Mammary epithelial cell (primary cell): ENCODE measurements at regions of chr18 and their contacts with region 1.

Region 1: DNA sequence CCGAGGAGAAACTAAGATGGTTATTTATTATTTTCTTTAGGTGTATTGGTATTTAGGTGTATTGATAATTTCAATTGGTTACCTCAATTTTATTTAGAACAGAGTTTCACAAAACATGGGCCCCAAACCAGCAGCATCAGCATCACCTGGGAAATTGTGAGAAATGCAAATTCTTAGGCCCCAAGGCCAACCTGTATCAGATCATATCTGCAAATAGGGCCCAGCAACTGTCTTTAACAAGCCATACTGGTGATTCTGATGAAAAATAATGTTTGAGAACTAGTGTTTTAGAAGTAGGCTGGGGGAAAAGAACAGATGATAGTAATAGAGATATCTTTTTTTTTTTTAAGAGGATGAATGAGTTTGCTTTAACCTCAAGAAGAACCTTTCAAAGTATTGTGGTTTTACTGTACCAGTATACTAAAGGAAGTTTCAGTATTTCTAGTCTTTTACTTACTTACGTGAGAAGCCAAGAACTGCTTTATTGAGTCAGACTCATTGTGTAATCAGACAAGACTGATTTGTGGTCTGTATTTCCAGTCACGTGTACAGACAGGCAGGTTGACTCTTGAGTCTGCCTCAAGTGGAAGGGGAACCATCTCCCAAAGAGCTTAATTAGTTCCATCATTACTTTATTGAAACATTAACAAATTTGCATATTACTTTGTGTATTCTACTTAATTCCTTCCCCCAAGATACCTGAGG is 60.4 kb upstream of the GAREM1 start:
- DNase-seq: peak; percentile 95
- H3K4me3 ChIP-seq: no peak overlapping the region
- H3K27ac ChIP-seq: peak overlapping the region; percentile 19
- H3K4me1 ChIP-seq: peaks cover 22% of the 10 kb centered on the region
- H3K27me3 ChIP-seq: no peaks in the 10 kb centered on the region
- CTCF ChIP-seq: no peak

Region 2: GRCh38 chr18:32298171-32298667 is 232.9 kb before region 1 on chr18:
- CTCF ChIA-PET with region 1: no interaction called
- dilution Hi-C with region 1: loop called (anchors 5 kb)
- in situ Hi-C with region 1: no loop called
- intact Hi-C with region 1: no loop called
- DNase-seq: no peak
- H3K4me3 ChIP-seq: no peak overlapping the region
- H3K27ac ChIP-seq: no peak overlapping the region
- H3K4me1 ChIP-seq: peaks cover 11% of the 10 kb centered on the region
- H3K27me3 ChIP-seq: no peaks in the 10 kb centered on the region
- CTCF ChIP-seq: no peak

Region 3: DNA sequence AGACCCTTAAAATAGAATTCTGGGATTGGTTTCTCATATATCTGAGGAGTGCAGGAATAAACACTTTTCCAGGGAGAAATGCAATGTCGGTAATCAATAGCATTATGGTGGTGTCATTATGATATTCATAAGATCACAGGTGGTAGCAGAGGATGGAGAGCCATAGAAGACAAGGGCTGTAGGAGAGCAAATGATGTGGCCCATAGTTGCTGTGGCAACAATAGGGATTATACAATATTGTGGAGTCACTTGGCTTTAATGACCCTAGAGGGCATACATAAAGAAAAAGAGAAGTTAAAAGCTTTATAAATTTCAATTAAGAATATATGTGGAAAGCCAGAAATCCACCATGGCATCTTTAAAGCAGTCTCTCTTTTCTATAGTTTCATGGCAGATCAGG is 37.0 kb before region 1 on chr18:
- CTCF ChIA-PET with region 1: no interaction called
- dilution Hi-C with region 1: loop called (anchors 5 kb)
- in situ Hi-C with region 1: no loop called
- intact Hi-C with region 1: no loop called
- DNase-seq: no peak
- H3K4me3 ChIP-seq: no peak overlapping the region
- H3K27ac ChIP-seq: no peak overlapping the region
- H3K4me1 ChIP-seq: no peaks in the 10 kb centered on the region
- H3K27me3 ChIP-seq: peaks cover 4% of the 10 kb centered on the region
- CTCF ChIP-seq: no peak